ENCODE measurements at regions of chr13 and their contacts with region 1.

Region 1: DNA sequence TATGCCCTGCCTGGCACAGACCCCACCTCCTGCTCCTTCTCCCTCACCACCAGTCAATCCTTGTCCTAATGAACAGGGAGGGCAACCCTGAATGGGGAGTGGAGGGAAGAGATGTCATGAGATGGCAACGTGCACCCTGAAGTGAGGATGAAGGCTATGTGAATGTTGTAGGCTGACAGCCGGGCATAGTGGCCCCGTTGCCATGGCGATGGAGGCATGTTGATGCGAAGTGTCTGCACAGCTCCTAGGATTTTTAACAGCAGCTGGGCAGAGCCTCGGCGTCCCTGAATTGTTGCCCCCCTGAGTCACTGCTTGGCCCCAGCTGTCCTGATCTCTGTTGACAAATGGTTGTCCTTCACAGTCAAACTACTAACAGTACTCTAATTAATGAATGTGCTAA is 4.8 kb upstream of the ALOX5AP start:
- DNase-seq: no peak
- ATAC-seq: no peak
- H3K4me3 ChIP-seq: no peak overlapping the region
- H3K27ac ChIP-seq: no peak overlapping the region
- H3K4me1 ChIP-seq: peaks cover 0 to 15% (median 0%) of the 10 kb centered on the region in 9 donors
- H3K27me3 ChIP-seq: peaks cover 0 to 29% (median 0%) of the 10 kb centered on the region in 7 donors
- CTCF ChIP-seq: no peak

Region 2: GRCh38 chr13:30779608-30780007 is 49.1 kb after region 1 on chr13:
- intact Hi-C with region 1: loop called in 1 of 10 experiments (anchors 5 kb)
- DNase-seq: no peak
- ATAC-seq: no peak
- H3K4me3 ChIP-seq: no peak overlapping the region
- H3K27ac ChIP-seq: no peak overlapping the region
- H3K4me1 ChIP-seq: peaks cover 0 to 5% (median 0%) of the 10 kb centered on the region in 9 donors
- H3K27me3 ChIP-seq: no peaks in the 10 kb centered on the region
- CTCF ChIP-seq: no peak